ENCODE measurements at regions of chr19 and their contacts with region 1.

Region 1: GRCh38 chr19:55339048-55339888 is at the start of gene KMT5C:
- DNase-seq: peak; percentile 100
- ATAC-seq: peak; percentile 81 to 92
- H3K4me3 ChIP-seq: peak within 1 kb of the TSS; percentile 63
- H3K27ac ChIP-seq: peak within 1 kb of the TSS; percentile 90 to 93
- H3K4me1 ChIP-seq: peaks cover 17% of the 10 kb centered on the region
- CTCF ChIP-seq: no peak
- EP300 ChIP-seq: no peak
- POLR2A ChIP-seq: no peak
- RAD21 ChIP-seq: no peak; a peak in 1 of 5 replicates
- polyA plus RNA-seq, gene KMT5C: 6.6 and 9.5 TPM in 2 replicates

Region 2: DNA sequence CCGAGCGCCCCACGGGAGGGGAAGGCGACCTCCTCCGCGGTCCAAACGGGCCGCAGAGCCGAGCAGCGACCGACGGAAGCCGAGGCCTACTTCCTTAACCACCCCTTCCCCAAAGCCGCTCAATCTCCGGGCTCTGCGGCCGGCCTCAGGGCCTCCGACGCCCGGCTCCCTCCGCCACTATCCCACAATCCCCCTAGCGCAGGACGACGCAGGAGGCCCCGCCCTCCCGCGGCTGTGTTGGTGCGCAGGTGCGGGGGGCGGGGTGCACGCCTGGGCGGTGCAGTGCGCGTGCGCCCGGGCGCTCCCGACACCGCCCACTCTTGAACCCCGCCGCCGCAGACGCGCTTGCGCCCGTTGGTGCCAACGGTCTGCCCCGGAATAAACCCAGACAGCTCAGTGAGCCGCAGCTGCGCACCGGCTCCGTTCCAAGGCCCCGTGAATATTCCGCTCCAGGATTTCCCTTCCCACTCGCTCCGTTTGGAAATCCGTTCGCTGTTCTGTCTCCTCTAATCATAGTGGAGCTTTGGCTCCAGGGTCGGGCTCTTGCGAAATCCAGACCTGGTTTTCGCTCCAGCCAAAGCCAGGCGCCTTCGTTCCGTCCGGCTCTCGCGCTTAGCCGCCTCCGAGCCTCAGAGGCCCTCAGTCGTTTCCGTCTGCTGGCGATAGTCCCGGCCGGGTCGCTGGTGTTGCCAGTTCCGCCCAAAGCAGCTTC is 80.3 kb before region 1 on chr19 and contains the start of gene PPP6R1:
- CTCF ChIA-PET with region 1: interaction called, 5 read pairs
- POLR2A ChIA-PET with region 1: interaction called, 18 read pairs
- DNase-seq: peak; percentile 99 to 100
- ATAC-seq: peak; percentile 83 to 93
- H3K4me3 ChIP-seq: peak within 1 kb of the TSS; percentile 81
- H3K27ac ChIP-seq: peak within 1 kb of the TSS; percentile 87 to 95
- H3K4me1 ChIP-seq: peaks cover 36% of the 10 kb centered on the region
- CTCF ChIP-seq: no peak
- EP300 ChIP-seq: peak in 1 of 2 experiments; percentile 31; a peak in 1 of 5 replicates
- POLR2A ChIP-seq: peak; percentile 87
- RAD21 ChIP-seq: peak; percentile 44 to 61; a peak in 4 of 5 replicates
- polyA plus RNA-seq, gene PPP6R1: 42.9 and 44.6 TPM in 2 replicates

Region 3: DNA sequence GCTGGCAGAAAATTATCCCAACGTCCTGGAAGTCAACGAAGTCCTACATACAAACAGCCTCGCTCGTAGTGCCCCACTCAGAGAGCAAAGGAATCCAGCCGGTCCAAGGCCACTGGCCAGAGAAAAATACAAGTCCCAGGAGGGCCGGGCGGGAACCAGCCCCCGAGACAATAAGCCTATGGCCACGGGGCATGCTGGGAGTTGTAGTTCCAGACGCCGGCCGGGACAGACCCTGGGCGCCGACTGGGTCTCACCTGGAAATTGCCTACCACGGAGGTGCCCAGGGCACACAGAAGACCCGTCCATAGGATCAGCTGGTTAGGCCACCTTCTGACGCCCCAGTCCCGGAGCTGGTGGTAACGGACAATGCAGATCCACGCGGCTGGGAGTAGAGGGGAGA is 19.5 kb before region 1 on chr19:
- CTCF ChIA-PET with region 1: interaction called, 24 read pairs
- POLR2A ChIA-PET with region 1: interaction called, 11 read pairs
- DNase-seq: no peak
- ATAC-seq: peak; percentile 54 to 82; a peak in 4 of 6 replicates
- H3K4me3 ChIP-seq: no peak overlapping the region
- H3K27ac ChIP-seq: 0 out of 6 replicates have a peak overlapping the region, but pooled peaks of 1 of the 2 experiments have one; percentile 14
- H3K4me1 ChIP-seq: peaks cover 19% of the 10 kb centered on the region
- CTCF ChIP-seq: no peak
- EP300 ChIP-seq: no peak
- POLR2A ChIP-seq: no peak
- RAD21 ChIP-seq: no peak

Region 4: GRCh38 chr19:55353803-55354697 is 14.8 kb after region 1 on chr19:
- CTCF ChIA-PET with region 1: interaction called, 6 read pairs
- POLR2A ChIA-PET with region 1: interaction called, 11 read pairs
- DNase-seq: peak; percentile 75 to 90
- ATAC-seq: peak; percentile 75 to 91
- H3K4me3 ChIP-seq: peak overlapping the region; percentile 50
- H3K27ac ChIP-seq: peak overlapping the region; percentile 62 to 84
- H3K4me1 ChIP-seq: peaks cover 12% of the 10 kb centered on the region
- CTCF ChIP-seq: no peak
- EP300 ChIP-seq: no peak
- POLR2A ChIP-seq: no peak
- RAD21 ChIP-seq: no peak

Region 5: DNA sequence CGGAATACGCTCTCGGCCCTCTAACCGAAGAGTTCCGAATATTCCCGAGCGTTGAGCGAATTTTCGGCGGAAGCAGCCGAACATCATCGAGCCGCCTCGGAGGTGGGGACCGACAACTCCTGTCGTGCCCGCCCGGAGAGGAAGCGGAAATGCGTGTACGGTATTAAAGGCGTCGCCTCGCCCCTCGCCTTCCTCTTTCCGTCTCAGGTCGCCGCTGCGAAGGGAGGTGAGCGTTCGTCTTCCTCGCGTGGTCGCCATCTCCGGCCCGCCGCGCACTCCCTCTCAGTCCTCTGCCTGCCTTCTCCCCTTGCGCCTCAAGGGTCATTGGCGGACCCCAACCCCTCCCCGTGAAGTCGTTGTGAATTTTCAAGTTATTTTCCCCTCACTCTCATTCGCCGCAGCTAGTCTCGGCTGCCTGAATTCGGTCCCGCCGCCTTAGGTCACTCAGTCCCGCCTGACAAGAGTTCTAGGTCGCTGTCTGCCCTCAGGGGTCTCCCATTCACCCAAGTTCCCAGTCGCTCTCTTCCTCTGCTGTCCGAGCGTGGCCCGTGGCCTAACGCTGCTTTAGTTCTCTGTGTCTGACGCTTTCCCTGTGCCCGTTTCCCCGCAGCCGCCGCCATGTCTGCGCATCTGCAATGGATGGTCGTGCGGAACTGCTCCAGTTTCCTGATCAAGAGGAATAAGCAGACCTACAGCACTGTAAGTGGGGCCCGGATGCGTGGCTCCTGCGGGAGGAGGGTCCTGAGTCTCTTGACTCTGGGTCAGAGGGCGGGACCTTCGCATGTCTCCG is 46.7 kb after region 1 on chr19 and contains the start of gene RPL28:
- CTCF ChIA-PET with region 1: interaction called, 18 read pairs
- POLR2A ChIA-PET with region 1: interaction called, 47 read pairs
- DNase-seq: peak; percentile 92 to 99
- ATAC-seq: peak; percentile 54 to 77
- H3K4me3 ChIP-seq: peak within 1 kb of the TSS; percentile 89
- H3K27ac ChIP-seq: peak within 1 kb of the TSS; percentile 91 to 99
- H3K4me1 ChIP-seq: peaks cover 50% of the 10 kb centered on the region
- CTCF ChIP-seq: no peak
- EP300 ChIP-seq: no peak
- POLR2A ChIP-seq: peak; percentile 100
- RAD21 ChIP-seq: no peak
- polyA plus RNA-seq, gene RPL28: 329 and 351 TPM in 2 replicates